ENCODE measurements at regions of chr4 and their contacts with region 1.

Region 1: GRCh38 chr4:38062088-38062893 is 102.1 kb downstream of the PTTG2 start:
- DNase-seq: peak; percentile 53
- ATAC-seq: peak; percentile 84
- H3K4me3 ChIP-seq: no peak overlapping the region
- H3K27ac ChIP-seq: no peak overlapping the region
- H3K4me1 ChIP-seq: peaks cover 6 to 11% of the 10 kb centered on the region in 2 experiments; a peak in 2 of 4 replicates
- H3K27me3 ChIP-seq: no peaks in the 10 kb centered on the region
- CTCF ChIP-seq: peak; percentile 51 to 84 (median 80)
- POLR2A ChIP-seq: no peak
- RAD21 ChIP-seq: peak; percentile 87

Region 2: GRCh38 chr4:38078590-38079421 is 16.5 kb after region 1 on chr4:
- CTCF ChIA-PET with region 1: no interaction called
- POLR2A ChIA-PET with region 1: no interaction called
- RAD21 ChIA-PET with region 1: no interaction called
- intact Hi-C with region 1: no loop called
- DNase-seq: no peak
- ATAC-seq: peak; percentile 63; the same call in 1 of the 2 replicates
- H3K4me3 ChIP-seq: no peak overlapping the region
- H3K27ac ChIP-seq: peak overlapping the region; percentile 47
- H3K4me1 ChIP-seq: peaks cover 23 to 26% of the 10 kb centered on the region in 2 experiments
- H3K27me3 ChIP-seq: no peaks in the 10 kb centered on the region
- CTCF ChIP-seq: no peak
- POLR2A ChIP-seq: no peak
- RAD21 ChIP-seq: no peak

Region 3: GRCh38 chr4:38169524-38169923 is 107.2 kb after region 1 on chr4:
- CTCF ChIA-PET with region 1: interaction called, 3 read pairs
- POLR2A ChIA-PET with region 1: no interaction called
- RAD21 ChIA-PET with region 1: no interaction called
- intact Hi-C with region 1: loop called (anchors 2 kb)
- DNase-seq: no peak
- ATAC-seq: peak; percentile 81
- H3K4me3 ChIP-seq: no peak overlapping the region
- H3K27ac ChIP-seq: no peak overlapping the region
- H3K4me1 ChIP-seq: peaks cover 2 to 17% of the 10 kb centered on the region in 2 experiments; a peak in 2 of 4 replicates
- H3K27me3 ChIP-seq: no peaks in the 10 kb centered on the region
- CTCF ChIP-seq: peak; percentile 28 to 42 (median 39); a peak in 2 of 6 replicates
- POLR2A ChIP-seq: no peak
- RAD21 ChIP-seq: peak; percentile 71

Region 4: DNA sequence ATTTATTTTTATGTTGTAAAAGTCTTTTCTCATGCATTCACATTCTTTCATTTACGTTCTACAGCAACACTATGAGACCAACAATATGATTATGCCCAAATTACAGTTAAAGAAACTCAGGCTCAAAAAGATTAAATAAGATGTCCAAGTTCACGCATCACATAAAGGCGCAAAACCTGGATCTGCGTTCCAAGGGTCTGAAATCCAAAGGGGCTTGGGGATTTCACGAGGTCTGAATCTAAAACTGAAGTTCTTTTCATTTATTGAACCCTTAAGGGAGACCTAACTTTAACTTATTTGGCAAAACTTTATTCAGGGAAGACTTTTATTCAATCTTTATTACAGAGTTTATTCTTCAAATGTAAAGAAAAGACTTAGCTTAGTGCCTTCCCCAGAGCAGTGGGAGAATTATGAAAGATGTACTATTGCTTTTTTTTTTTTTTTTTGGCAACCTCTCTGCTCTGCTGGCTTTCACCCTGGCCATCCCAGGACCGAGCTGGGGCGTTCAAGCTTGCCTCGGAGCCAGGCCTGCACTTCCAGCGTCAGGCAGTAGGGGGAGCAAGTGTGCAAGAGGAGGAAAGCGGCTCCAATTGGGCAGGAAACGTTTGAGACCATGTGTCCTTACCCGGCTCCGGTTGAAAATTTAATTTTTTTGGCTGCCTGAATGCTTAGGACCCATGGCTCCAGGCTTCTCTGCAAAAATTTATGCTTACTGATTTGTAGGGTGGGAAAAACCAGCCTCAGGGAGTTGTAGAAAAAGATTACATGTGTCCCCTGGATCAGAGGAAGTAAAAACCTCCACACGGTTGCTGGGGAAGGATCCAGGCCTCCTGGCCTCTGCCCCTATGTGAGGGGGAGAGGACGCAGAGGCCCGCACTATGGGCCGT is 257.4 kb after region 1 on chr4:
- CTCF ChIA-PET with region 1: interaction called, 3 read pairs
- POLR2A ChIA-PET with region 1: no interaction called
- RAD21 ChIA-PET with region 1: no interaction called
- intact Hi-C with region 1: loop called (anchors 2 kb)
- DNase-seq: no peak
- ATAC-seq: peak; percentile 70
- H3K4me3 ChIP-seq: peak overlapping the region in 1 of 2 experiments; percentile 29; a peak in 2 of 4 replicates
- H3K27ac ChIP-seq: peak overlapping the region; percentile 63
- H3K4me1 ChIP-seq: peaks cover 19 to 43% of the 10 kb centered on the region in 2 experiments
- H3K27me3 ChIP-seq: no peaks in the 10 kb centered on the region
- CTCF ChIP-seq: peak; percentile 72 to 99 (median 98)
- POLR2A ChIP-seq: no peak
- RAD21 ChIP-seq: peak; percentile 92

Region 5: DNA sequence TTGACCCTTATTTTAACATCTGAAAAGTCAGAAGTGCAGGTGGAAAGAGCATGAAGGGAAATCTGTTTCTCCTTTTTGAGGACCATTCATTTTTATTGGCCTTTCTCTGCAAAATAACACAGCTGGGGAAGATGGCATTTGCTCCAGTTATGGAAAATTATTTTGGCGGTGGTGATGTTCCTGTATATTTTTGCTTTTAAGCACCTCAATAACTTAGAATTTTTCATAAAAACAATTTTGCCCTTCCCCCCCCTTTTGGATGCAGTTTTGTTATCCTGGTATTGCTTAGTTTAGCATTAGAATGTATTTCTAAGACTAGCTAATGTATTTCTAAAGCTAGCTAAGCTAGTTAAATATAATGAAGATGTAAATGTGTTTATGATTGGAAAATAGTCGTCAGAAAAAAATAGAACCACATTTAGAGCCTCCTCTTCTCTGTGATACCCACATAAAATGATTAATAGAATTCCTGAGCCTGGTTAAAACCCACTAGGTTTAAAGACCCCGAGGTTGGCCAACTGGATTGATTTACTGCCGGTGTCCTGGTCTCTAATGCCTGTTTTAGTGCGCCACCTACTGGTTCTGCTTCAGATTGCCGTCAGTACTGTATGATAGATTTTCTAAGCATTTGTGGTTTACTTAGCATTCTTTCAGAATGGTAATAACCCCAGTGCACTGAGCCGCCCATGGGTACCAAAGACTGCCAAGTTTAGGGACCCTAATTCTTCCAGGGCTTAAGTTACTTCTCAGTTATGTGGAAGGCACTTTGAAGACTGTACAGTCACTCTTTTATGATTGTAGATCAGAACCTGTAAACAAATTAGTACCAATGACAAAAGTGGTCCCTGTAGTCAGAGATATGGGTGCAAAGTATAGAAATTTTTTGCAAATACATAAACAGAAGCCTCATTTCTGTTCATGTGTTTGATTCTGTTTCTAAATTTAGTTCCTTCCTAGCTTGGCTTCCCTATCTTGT is 613.1 kb after region 1 on chr4:
- CTCF ChIA-PET with region 1: no interaction called
- POLR2A ChIA-PET with region 1: no interaction called
- RAD21 ChIA-PET with region 1: no interaction called
- intact Hi-C with region 1: loop called (anchors 1 kb)
- DNase-seq: peak; percentile 60
- ATAC-seq: peak; percentile 58
- H3K4me3 ChIP-seq: 0 out of 4 replicates have a peak overlapping the region, but pooled peaks of 1 of the 2 experiments have one; percentile 32
- H3K27ac ChIP-seq: peak overlapping the region; percentile 88
- H3K4me1 ChIP-seq: peaks cover 54 to 56% of the 10 kb centered on the region in 2 experiments
- H3K27me3 ChIP-seq: no peaks in the 10 kb centered on the region
- CTCF ChIP-seq: peak in 2 of 3 experiments; percentile 82 to 94; a peak in 4 of 6 replicates
- POLR2A ChIP-seq: no peak
- RAD21 ChIP-seq: no peak

Region 6: GRCh38 chr4:38730830-38731646 is 668.7 kb after region 1 on chr4:
- CTCF ChIA-PET with region 1: no interaction called
- POLR2A ChIA-PET with region 1: no interaction called
- RAD21 ChIA-PET with region 1: interaction called in 1 of 2 experiments, 4 read pairs
- intact Hi-C with region 1: loop called (anchors 1 kb)
- DNase-seq: peak; percentile 50
- ATAC-seq: peak; percentile 64
- H3K4me3 ChIP-seq: 0 out of 4 replicates have a peak overlapping the region, but pooled peaks of 1 of the 2 experiments have one; percentile 5
- H3K27ac ChIP-seq: no peak overlapping the region
- H3K4me1 ChIP-seq: peaks cover 22 to 30% of the 10 kb centered on the region in 2 experiments
- H3K27me3 ChIP-seq: no peaks in the 10 kb centered on the region
- CTCF ChIP-seq: peak; percentile 82 to 99 (median 96)
- POLR2A ChIP-seq: no peak
- RAD21 ChIP-seq: peak; percentile 96

Region 7: DNA sequence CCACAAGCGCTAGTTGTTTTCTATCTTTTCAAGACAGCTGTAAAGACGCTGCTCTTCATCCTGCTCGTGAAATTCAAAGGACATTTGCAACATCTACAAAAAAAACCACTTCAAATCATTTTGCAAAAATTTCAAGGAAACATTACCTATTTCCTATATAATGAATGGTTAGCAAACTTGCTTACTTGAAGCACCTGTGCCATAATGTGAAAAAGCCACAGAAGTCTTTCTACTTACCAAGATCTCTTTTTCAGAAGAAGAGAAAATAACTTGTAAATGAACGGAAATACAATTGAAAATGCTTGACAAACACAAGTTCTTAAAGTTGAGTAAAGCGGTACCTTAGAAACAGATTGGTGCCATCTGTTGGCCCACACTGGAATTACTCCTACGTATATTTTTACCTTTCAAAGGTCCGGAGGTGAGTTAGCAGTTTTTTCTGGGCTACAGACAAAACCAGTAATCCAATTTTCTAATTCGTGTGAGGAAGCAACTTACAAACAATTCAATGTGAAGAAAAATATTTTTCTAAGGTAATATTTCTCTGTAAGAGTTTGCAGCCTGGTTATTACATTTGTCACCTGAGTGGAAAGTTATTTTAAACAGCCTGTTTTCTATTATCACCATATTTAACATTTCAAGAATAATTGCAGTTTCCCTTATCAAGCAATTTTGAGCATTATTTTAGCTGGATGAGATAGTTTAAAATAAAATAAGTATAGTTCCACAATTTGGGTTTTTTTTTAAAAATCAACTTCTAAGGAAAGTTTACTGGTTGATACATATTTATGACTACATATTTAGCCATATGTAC is 794.4 kb after region 1 on chr4 and contains the start of gene TLR6:
- CTCF ChIA-PET with region 1: no interaction called
- POLR2A ChIA-PET with region 1: no interaction called
- RAD21 ChIA-PET with region 1: no interaction called
- intact Hi-C with region 1: loop called (anchors 5 kb)
- DNase-seq: peak; percentile 80
- ATAC-seq: peak; percentile 4; the same call in 1 of the 2 replicates
- H3K4me3 ChIP-seq: peak within 1 kb of the TSS; percentile 41 to 57
- H3K27ac ChIP-seq: peak within 1 kb of the TSS; percentile 84
- H3K4me1 ChIP-seq: peaks cover 19 to 49% of the 10 kb centered on the region in 2 experiments
- H3K27me3 ChIP-seq: no peaks in the 10 kb centered on the region
- CTCF ChIP-seq: peak; percentile 58 to 78 (median 64); a peak in 5 of 6 replicates
- POLR2A ChIP-seq: no peak
- RAD21 ChIP-seq: peak; percentile 53
- total RNA-seq, gene TLR6: 4.8 TPM